ENCODE measurements at regions of chr3 and their contacts with region 1.

Region 1: GRCh38 chr3:134381827-134382442 is 7.7 kb upstream of the AMOTL2 start:
- DNase-seq: peak; percentile 98
- H3K4me3 Mint-ChIP-seq: peak overlapping the region; percentile 51
- H3K27ac Mint-ChIP-seq: peak overlapping the region; percentile 84
- H3K4me1 Mint-ChIP-seq: peaks cover 54% of the 10 kb centered on the region
- H3K27me3 Mint-ChIP-seq: no peaks in the 10 kb centered on the region
- CTCF ChIP-seq: no peak

Region 2: DNA sequence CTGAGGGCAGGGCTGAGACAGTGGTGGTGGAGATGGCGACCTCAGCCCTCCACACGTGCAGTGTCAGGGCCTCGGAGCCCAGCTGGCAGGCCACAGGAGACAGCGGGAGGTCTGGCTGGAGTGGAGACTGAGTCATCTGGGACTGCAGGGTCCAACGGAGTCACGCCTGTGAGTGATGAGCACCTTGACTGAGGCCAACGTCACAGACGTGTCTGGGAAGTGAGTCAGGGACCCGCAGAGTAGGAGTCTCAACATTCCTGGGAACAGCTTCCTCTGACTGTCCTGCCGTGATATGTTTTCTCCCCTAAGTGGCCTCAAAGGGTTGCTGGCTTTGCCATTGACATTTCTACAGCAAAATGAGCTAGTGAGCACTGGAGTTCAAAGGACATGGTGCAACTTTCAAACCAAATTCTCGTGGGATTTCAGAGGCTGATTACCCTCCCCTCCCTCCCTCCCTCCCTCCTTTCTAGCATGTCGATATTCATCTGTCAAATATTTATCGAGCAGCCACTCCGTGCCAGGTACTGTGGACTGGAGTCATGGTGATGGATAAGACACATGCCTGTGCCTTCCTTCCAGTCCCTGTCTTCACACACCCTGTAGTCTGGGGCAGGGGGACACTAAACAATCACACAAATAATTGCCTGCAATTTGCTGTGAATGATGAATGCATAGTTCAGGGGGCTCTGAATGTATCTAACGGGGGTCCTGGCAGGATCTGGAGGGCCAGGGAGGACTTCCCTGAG is 45.6 kb after region 1 on chr3:
- CTCF ChIA-PET with region 1: interaction called, 4 read pairs
- intact Hi-C with region 1: loop called (anchors 5 kb)
- DNase-seq: peak; percentile 86
- H3K4me3 Mint-ChIP-seq: peak overlapping the region; percentile 42
- H3K27ac Mint-ChIP-seq: peak overlapping the region; percentile 61
- H3K4me1 Mint-ChIP-seq: peaks cover 20% of the 10 kb centered on the region
- H3K27me3 Mint-ChIP-seq: peaks cover 10% of the 10 kb centered on the region
- CTCF ChIP-seq: no peak